Activated CD4-positive, alpha-beta T cell treated with anti-CD3 and anti-CD28 coated beads, Interleukin-2, amount 10 ng/mL, durations not matched to agents 24 days and 14 days (primary cell): ENCODE measurements at regions of chr2 and their contacts with region 1.

Region 1: GRCh38 chr2:11234309-11234708 is 79.0 kb downstream of the SLC66A3 start:
- DNase-seq: no peak
- H3K4me3 Mint-ChIP-seq: no peak overlapping the region
- H3K27ac Mint-ChIP-seq: no peak overlapping the region
- H3K4me1 Mint-ChIP-seq: peaks cover 6% of the 10 kb centered on the region
- H3K27me3 Mint-ChIP-seq: no peaks in the 10 kb centered on the region

Region 2: GRCh38 chr2:11281186-11281585 is 46.9 kb after region 1 on chr2:
- intact Hi-C with region 1: no loop called
- DNase-seq: no peak
- H3K4me3 Mint-ChIP-seq: no peak overlapping the region
- H3K27ac Mint-ChIP-seq: no peak overlapping the region
- H3K4me1 Mint-ChIP-seq: peaks cover 4% of the 10 kb centered on the region
- H3K27me3 Mint-ChIP-seq: no peaks in the 10 kb centered on the region

Region 3: DNA sequence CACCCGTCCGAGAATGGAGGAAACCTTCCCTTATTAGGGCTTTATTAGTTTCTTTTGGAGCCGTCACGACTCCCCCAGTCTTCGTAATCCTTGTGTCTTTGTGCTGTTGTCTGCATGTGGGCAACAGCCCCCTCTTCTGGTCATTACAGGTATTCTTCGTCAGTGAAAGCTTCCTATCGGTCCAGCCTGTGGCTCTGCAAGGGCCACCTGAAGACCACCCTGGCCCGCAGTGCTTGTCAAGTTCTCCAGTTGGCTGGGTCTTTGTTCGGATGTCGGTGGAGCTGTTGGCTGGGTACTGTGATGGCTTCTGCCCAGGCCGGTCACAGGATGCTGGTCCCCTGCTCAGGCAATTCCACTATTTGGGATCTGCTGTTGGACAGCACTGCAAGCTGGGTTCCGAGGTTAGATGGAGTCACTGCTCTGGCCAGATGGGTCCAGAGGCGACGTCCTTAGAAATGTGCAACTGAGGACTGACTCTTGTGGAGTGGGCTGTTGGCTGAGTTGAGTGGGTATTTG is 212.5 kb after region 1 on chr2:
- intact Hi-C with region 1: loop called (anchors 5 kb)
- DNase-seq: peak; percentile 85
- H3K4me3 Mint-ChIP-seq: no peak overlapping the region
- H3K27ac Mint-ChIP-seq: no peak overlapping the region
- H3K4me1 Mint-ChIP-seq: no peaks in the 10 kb centered on the region
- H3K27me3 Mint-ChIP-seq: no peaks in the 10 kb centered on the region